GM12878 (cell line): ENCODE measurements at regions of chr13 and their contacts with region 1.

Region 1: GRCh38 chr13:20482275-20482761 is 43.3 kb downstream of the CRYL1 start:
- DNase-seq: no peak
- ATAC-seq: no peak
- H3K4me3 ChIP-seq: no peak overlapping the region
- H3K27ac ChIP-seq: no peak overlapping the region
- H3K4me1 ChIP-seq: no peaks in the 10 kb centered on the region
- H3K27me3 ChIP-seq: no peaks in the 10 kb centered on the region
- CTCF ChIP-seq: no peak
- EP300 ChIP-seq: no peak
- POLR2A ChIP-seq: no peak
- RAD21 ChIP-seq: no peak

Region 2: GRCh38 chr13:20192158-20192835 is 290.0 kb before region 1 on chr13:
- CTCF ChIA-PET with region 1: interaction called, 101 read pairs
- POLR2A ChIA-PET with region 1: no interaction called
- RAD21 ChIA-PET with region 1: interaction called, 3 read pairs
- SMC1A ChIA-PET with region 1: interaction called, 27 read pairs
- in situ Hi-C with region 1: loop called (anchors 5 kb)
- intact Hi-C with region 1: no loop called
- DNase-seq: no peak
- ATAC-seq: no peak; the same call in 2 of the 3 replicates
- H3K4me3 ChIP-seq: peak overlapping the region; percentile 37; the same call in 1 of the 2 replicates
- H3K27ac ChIP-seq: no peak overlapping the region
- H3K4me1 ChIP-seq: peaks cover 12% of the 10 kb centered on the region
- H3K27me3 ChIP-seq: peaks cover 7 to 25% of the 10 kb centered on the region in 2 experiments; a peak in 3 of 4 replicates
- CTCF ChIP-seq: 0 out of 6 replicates have a peak, but pooled peaks of 1 of the 3 experiments have one; percentile 2
- EP300 ChIP-seq: no peak
- POLR2A ChIP-seq: no peak
- RAD21 ChIP-seq: peak; percentile 31; the same call in 1 of the 2 replicates